ENCODE measurements at regions of chr1 and their contacts with region 1.

Region 1: DNA sequence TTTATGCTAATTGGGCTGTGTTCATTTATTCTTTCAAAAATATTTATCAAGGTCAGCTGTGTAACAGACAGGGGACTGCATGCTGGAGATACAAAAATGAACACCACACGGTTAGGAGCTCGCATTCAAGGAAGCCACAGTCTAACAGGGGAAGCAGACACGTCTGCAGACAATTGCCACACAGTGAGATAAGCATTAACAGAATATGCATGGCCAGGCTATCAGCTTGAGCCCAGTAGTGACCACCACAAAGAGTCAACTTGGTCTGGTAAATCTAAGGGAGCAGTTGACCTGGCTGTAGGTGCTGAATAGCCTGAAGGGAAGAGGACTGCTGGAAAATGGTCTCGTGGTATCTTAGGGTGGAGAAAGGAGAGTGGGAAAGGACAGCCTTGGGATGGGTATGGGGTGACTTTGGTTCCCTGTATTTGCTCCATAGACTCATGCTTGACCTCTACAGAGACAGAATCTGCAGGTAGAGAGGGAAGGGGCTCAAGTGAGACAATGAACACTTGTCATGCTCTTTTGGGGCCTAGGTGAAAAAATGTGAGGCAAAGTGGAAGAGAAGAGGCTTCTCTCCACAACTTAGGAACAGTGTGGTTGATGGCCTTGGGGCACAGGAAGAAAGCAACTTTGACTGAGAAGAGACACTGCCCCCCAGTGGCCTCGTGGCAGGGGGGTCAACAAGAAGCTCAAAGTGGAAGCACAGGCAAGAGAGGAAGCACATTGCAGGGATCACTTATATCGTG is 7.6 kb upstream of the NPL start:
- DNase-seq: peak; percentile 82
- H3K4me3 Mint-ChIP-seq: no peak overlapping the region
- H3K27ac Mint-ChIP-seq: no peak overlapping the region
- H3K4me1 Mint-ChIP-seq: peaks cover 19% of the 10 kb centered on the region
- H3K27me3 Mint-ChIP-seq: no peaks in the 10 kb centered on the region
- CTCF ChIP-seq: peak; percentile 76

Region 2: GRCh38 chr1:182446033-182446669 is 335.9 kb before region 1 on chr1:
- CTCF ChIA-PET with region 1: interaction called, 24 read pairs
- POLR2A ChIA-PET with region 1: no interaction called
- intact Hi-C with region 1: loop called (anchors 1 kb)
- DNase-seq: peak; percentile 81
- H3K4me3 Mint-ChIP-seq: no peak overlapping the region
- H3K27ac Mint-ChIP-seq: no peak overlapping the region
- H3K4me1 Mint-ChIP-seq: peaks cover 6% of the 10 kb centered on the region
- H3K27me3 Mint-ChIP-seq: no peaks in the 10 kb centered on the region
- CTCF ChIP-seq: peak; percentile 89

Region 3: GRCh38 chr1:182604169-182605164 is 177.5 kb before region 1 on chr1 and contains the start of gene RGS16:
- CTCF ChIA-PET with region 1: interaction called, 991 read pairs
- POLR2A ChIA-PET with region 1: interaction called, 151 read pairs
- intact Hi-C with region 1: loop called (anchors 1 kb)
- DNase-seq: peak; percentile 95
- H3K4me3 Mint-ChIP-seq: no peak within 1 kb of the TSS
- H3K27ac Mint-ChIP-seq: peak within 1 kb of the TSS; percentile 13
- H3K4me1 Mint-ChIP-seq: peaks cover 12% of the 10 kb centered on the region
- H3K27me3 Mint-ChIP-seq: no peaks in the 10 kb centered on the region
- CTCF ChIP-seq: no peak
- total RNA-seq, gene RGS16: 11.9 and 13.7 TPM in 2 replicates

Region 4: DNA sequence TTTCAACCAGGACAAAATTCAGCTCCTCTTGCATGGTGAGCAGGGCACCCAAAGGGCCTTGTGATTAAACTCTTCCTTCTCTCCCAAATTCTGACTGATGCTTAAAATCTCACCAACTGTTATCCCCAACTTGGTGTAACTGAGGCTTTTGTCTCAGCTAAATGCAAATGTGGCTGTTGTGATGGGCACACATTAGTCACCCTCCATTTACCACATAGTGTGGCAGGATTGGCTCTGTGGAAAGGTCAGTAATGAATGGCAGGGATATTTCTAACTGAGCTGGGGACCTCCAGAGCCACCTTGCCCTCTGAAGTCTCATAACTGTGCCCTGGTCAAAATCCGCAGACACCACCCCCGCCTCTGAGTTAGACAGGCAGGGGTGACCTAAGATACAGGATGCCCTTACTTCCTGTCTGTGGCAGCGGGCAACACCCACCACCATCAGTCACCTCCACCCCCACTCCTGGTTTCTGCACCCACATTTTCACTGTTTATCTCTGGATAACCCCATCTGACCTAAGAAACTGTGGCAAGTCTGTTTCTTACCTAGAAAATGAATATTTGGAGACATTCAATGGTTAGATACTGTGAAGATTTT is 152.4 kb before region 1 on chr1:
- CTCF ChIA-PET with region 1: interaction called, 42 read pairs
- POLR2A ChIA-PET with region 1: no interaction called
- intact Hi-C with region 1: no loop called
- DNase-seq: no peak
- H3K4me3 Mint-ChIP-seq: no peak overlapping the region
- H3K27ac Mint-ChIP-seq: peak overlapping the region; percentile 4
- H3K4me1 Mint-ChIP-seq: peaks cover 34% of the 10 kb centered on the region
- H3K27me3 Mint-ChIP-seq: no peaks in the 10 kb centered on the region
- CTCF ChIP-seq: no peak

Region 5: DNA sequence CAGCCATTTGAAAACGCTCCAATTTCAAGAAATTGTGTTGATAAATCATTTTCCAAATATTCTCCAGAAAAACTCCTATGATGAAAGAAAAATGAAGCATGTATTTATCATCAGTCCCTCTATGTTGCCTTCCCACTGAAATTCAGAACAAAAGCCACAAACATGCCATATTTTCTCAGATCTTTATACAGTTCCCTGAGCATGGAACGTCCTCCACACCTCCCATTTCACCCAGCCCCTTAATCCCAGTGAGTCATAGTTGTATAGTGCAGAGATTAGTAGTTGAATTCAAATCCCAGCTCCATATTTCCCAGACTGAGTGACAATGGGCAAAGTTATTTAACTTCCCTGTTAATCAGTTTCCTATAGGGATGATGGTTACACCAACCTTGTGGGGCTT is 13.1 kb before region 1 on chr1:
- CTCF ChIA-PET with region 1: interaction called, 40 read pairs
- POLR2A ChIA-PET with region 1: no interaction called
- intact Hi-C with region 1: no loop called
- DNase-seq: peak; percentile 63
- H3K4me3 Mint-ChIP-seq: no peak overlapping the region
- H3K27ac Mint-ChIP-seq: no peak overlapping the region
- H3K4me1 Mint-ChIP-seq: peaks cover 10% of the 10 kb centered on the region
- H3K27me3 Mint-ChIP-seq: no peaks in the 10 kb centered on the region
- CTCF ChIP-seq: no peak

Region 6: DNA sequence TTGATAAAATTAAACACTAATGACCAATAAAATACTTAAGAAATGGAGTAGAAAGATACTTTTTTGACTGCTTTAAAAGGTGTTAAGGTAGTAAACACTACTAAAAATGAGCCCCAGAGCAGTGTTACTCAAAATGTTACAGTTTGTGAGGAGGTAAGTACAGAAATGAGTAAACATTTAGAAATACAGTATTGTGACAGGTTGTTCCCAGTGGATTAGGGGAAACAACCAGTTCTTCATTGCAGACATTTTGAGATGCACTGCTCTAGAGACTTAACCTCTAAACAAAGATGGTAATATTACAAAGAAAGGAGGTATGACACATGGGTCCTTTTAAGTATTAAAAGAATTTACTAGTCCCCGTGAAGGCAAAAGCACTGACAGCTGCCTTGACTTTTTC is 69.8 kb after region 1 on chr1:
- CTCF ChIA-PET with region 1: no interaction called
- POLR2A ChIA-PET with region 1: no interaction called
- intact Hi-C with region 1: no loop called
- DNase-seq: no peak
- H3K4me3 Mint-ChIP-seq: no peak overlapping the region
- H3K27ac Mint-ChIP-seq: no peak overlapping the region
- H3K4me1 Mint-ChIP-seq: peaks cover 31% of the 10 kb centered on the region
- H3K27me3 Mint-ChIP-seq: no peaks in the 10 kb centered on the region
- CTCF ChIP-seq: no peak

Region 7: DNA sequence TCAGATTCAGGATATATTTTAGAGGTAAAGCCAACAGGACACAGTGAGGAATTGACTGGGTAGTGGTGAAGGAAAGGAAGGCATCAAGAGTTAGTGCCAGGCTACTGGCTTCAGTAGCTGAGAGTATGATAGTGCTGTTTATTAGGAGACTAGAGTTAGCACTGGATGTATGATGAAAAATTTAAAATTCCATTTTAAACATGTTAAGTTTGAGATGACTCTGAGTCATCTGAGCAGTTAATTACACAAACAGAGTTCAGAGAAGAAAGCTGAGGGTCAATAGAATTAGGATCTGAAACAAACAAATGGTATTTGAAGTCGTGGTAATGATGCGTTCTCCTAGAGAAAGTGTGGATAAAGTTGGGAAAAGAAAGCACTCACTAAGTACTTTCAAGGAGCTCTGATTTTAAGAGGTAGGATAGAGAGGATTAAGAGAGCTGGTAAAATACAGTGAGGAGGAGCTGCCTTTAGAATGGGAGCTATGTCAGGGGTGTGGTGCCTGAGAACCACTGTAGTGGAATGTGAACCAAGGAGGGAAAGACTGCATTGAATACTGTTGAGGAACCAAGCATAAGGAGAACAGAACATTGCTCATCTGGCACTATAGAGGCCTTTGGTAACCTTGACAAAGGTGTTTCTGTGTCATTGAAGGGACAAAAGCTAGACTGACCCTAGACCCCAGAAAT is 192.6 kb after region 1 on chr1:
- CTCF ChIA-PET with region 1: no interaction called
- POLR2A ChIA-PET with region 1: no interaction called
- intact Hi-C with region 1: no loop called
- DNase-seq: no peak
- H3K4me3 Mint-ChIP-seq: no peak overlapping the region
- H3K27ac Mint-ChIP-seq: no peak overlapping the region
- H3K4me1 Mint-ChIP-seq: peaks cover 7% of the 10 kb centered on the region
- H3K27me3 Mint-ChIP-seq: no peaks in the 10 kb centered on the region
- CTCF ChIP-seq: no peak